Naive thymus-derived CD4-positive, alpha-beta T cell (primary cell): ENCODE measurements at regions of chr1 and their contacts with region 1.

Region 1: GRCh38 chr1:244341455-244342450 is 110.0 kb downstream of the ADSS2 start:
- DNase-seq: no peak
- ATAC-seq: peak; percentile 67
- H3K4me3 ChIP-seq: no peak overlapping the region
- H3K4me3 Mint-ChIP-seq: peak overlapping the region in 1 of 10 donors; percentile 73
- H3K27ac ChIP-seq: no peak overlapping the region
- H3K27ac Mint-ChIP-seq: peak overlapping the region in 1 of 9 donors; percentile 90
- H3K4me1 ChIP-seq: no peaks in the 10 kb centered on the region
- H3K4me1 Mint-ChIP-seq: peaks cover 0 to 44% (median 4%) of the 10 kb centered on the region in 7 donors
- H3K27me3 ChIP-seq: no peaks in the 10 kb centered on the region
- H3K27me3 Mint-ChIP-seq: peaks cover 0 to 6% (median 5%) of the 10 kb centered on the region in 5 donors

Region 2: GRCh38 chr1:244150665-244151064 is 191.1 kb before region 1 on chr1:
- CTCF ChIA-PET with region 1: no interaction called
- POLR2A ChIA-PET with region 1: no interaction called
- intact Hi-C with region 1: no loop called
- DNase-seq: no peak
- ATAC-seq: no peak
- H3K4me3 ChIP-seq: no peak overlapping the region
- H3K4me3 Mint-ChIP-seq: no peak overlapping the region
- H3K27ac ChIP-seq: no peak overlapping the region
- H3K27ac Mint-ChIP-seq: no peak overlapping the region
- H3K4me1 ChIP-seq: no peaks in the 10 kb centered on the region
- H3K4me1 Mint-ChIP-seq: no peaks in the 10 kb centered on the region
- H3K27me3 ChIP-seq: no peaks in the 10 kb centered on the region
- H3K27me3 Mint-ChIP-seq: no peaks in the 10 kb centered on the region

Region 3: DNA sequence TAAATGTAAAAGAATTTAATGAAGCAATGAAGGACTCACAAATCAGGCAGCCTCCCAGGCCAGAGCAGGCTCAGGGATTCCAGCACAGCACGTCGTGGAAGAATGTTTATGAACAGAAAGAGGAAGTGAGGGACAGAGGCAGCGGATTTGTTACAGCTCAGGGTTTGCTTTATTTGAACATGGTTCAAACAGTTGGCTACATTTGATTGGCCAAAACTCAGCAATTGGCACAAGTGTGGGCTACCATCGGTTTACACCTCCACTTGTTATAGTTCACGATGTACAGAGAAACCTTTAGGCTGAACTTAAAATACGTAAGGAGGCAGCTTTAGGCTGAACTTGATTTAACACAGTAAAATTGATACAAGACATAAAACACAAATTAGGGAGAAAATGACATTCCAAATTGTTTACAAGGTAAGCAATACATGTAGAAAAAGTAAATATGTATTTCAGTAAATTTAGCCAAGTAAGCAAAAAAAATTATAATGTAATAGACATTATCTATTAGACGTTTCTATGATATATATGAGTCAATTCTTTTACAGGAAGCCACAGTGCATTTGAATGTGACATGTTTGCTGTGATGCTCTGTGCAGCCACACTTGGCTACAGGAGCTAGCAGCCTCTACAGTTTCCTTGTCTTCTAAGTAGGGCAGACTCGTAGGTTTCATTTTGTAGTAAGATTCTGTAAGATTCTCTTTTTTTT is 16.5 kb before region 1 on chr1:
- CTCF ChIA-PET with region 1: no interaction called
- POLR2A ChIA-PET with region 1: no interaction called
- intact Hi-C with region 1: loop called in 1 of 2 experiments (anchors 1 kb)
- DNase-seq: peak in 2 of 9 donors; percentile 5 to 11
- ATAC-seq: peak; percentile 76
- H3K4me3 ChIP-seq: no peak overlapping the region
- H3K4me3 Mint-ChIP-seq: peak overlapping the region in 6 of 10 donors; percentile 4 to 82 (median 70)
- H3K27ac ChIP-seq: no peak overlapping the region
- H3K27ac Mint-ChIP-seq: peak overlapping the region in 6 of 9 donors; percentile 4 to 92 (median 37)
- H3K4me1 ChIP-seq: peaks cover 0 to 28% of the 10 kb centered on the region in 2 donors
- H3K4me1 Mint-ChIP-seq: peaks cover 0 to 51% (median 0%) of the 10 kb centered on the region in 7 donors
- H3K27me3 ChIP-seq: no peaks in the 10 kb centered on the region
- H3K27me3 Mint-ChIP-seq: peaks cover 0 to 6% (median 4%) of the 10 kb centered on the region in 5 donors